ENCODE measurements at regions of chr7 and their contacts with region 1.

Region 1: GRCh38 chr7:93902777-93903423 is 3.5 kb upstream of the GNGT1 start:
- DNase-seq: peak; percentile 23
- H3K4me3 ChIP-seq: no peak overlapping the region
- H3K27ac ChIP-seq: no peak overlapping the region
- H3K4me1 ChIP-seq: no peaks in the 10 kb centered on the region
- H3K27me3 ChIP-seq: no peaks in the 10 kb centered on the region
- CTCF ChIP-seq: peak; percentile 59

Region 2: GRCh38 chr7:94087664-94088352 is 184.9 kb after region 1 on chr7:
- intact Hi-C with region 1: loop called (anchors 5 kb)
- DNase-seq: peak; percentile 32
- H3K4me3 ChIP-seq: no peak overlapping the region
- H3K27ac ChIP-seq: no peak overlapping the region
- H3K4me1 ChIP-seq: no peaks in the 10 kb centered on the region
- H3K27me3 ChIP-seq: no peaks in the 10 kb centered on the region
- CTCF ChIP-seq: peak; percentile 66

Region 3: GRCh38 chr7:94190599-94191061 is 287.7 kb after region 1 on chr7:
- intact Hi-C with region 1: no loop called
- DNase-seq: no peak
- H3K4me3 ChIP-seq: no peak overlapping the region
- H3K27ac ChIP-seq: no peak overlapping the region
- H3K4me1 ChIP-seq: no peaks in the 10 kb centered on the region
- H3K27me3 ChIP-seq: no peaks in the 10 kb centered on the region
- CTCF ChIP-seq: no peak

Region 4: DNA sequence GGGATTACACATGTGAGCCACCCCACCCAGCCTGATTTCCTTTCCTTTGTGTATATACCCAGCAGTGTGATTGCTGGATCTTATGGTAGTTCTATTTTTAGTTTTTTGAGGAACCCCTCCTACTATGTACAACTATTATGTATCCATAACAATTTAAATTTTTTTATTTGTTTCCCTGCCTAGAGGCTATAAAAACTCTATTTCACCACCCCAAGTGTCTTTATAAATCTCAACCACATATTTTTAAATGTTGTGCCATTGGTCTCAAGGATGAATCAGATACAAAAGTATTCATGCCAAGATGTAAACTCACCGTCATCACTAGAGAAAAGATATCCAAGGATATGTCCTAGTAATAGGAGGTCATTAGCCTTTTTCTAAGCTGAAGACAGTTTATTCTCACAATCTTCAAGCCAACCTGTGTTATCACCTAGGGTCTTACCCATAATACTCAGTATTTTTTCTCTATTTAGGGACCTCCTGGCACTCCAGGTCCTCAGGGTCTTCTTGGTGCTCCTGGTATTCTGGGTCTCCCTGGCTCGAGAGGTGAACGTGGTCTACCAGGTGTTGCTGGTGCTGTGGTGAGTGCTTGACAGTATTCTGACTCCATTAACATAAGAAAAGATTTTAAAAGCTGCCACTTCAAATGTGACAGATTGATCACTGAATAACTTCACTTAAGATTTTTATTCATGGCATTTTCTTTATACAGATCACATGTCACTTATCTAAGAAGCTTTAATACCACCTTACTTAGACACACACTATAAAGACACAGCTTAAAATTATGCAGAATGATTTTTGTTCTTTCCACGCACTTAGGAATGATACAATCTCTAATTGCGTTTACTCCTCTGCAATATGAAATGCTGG is 521.2 kb after region 1 on chr7:
- intact Hi-C with region 1: no loop called
- DNase-seq: no peak
- H3K4me3 ChIP-seq: no peak overlapping the region
- H3K27ac ChIP-seq: no peak overlapping the region
- H3K4me1 ChIP-seq: no peaks in the 10 kb centered on the region
- H3K27me3 ChIP-seq: no peaks in the 10 kb centered on the region
- CTCF ChIP-seq: no peak

Measured in colonic mucosa (tissue), 4 donors.